HEK293 (cell line): ENCODE measurements at regions of chr11 and their contacts with region 1.

Region 1: GRCh38 chr11:124673333-124674167 is at the starts of genes SIAE and SPA17:
- H3K4me3 ChIP-seq: peak within 1 kb of the TSS; percentile 78
- H3K27ac ChIP-seq: peak within 1 kb of the TSS; percentile 35; the same call in 1 of the 2 replicates
- H3K4me1 ChIP-seq: no peaks in the 10 kb centered on the region; the same call in 1 of the 2 replicates
- CTCF ChIP-seq: no peak

Region 2: DNA sequence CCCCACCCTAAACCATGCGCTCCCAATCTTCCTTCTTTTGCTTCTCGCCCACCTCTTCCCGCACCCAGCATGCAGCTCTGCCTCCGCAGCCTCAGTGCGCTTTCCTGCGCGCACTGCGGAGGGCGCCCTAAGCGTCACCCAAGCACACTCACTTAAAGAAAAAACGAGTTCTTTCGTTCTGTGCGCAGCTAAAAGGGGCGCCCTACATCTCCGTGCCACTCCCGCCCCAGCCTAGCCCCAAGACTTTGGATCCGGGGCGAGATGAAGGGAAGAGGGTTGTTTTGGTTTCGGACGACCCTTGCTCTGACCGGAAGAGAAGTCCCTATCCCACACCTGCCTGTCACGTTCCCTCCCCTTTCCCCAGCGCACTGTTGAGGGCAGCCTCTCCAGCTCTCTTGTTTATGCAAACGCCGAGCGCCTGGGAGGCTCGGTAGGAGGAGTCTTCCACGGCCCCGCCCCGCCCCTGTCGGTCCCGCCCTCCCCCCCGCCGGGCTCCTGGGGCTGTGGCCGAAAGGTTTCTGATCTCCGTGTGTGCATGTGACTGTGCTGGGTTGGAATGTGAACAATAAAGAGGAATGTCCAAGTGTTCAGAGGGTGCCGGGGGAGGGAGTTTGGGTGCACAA is 73.2 kb after region 1 on chr11:
- CTCF ChIA-PET with region 1: interaction called, 23 read pairs
- POLR2A ChIA-PET with region 1: interaction called, 4 read pairs
- H3K4me3 ChIP-seq: peak overlapping the region; percentile 53
- H3K27ac ChIP-seq: no peak overlapping the region; the same call in 1 of the 2 replicates
- H3K4me1 ChIP-seq: no peaks in the 10 kb centered on the region
- CTCF ChIP-seq: peak; percentile 77

Region 3: DNA sequence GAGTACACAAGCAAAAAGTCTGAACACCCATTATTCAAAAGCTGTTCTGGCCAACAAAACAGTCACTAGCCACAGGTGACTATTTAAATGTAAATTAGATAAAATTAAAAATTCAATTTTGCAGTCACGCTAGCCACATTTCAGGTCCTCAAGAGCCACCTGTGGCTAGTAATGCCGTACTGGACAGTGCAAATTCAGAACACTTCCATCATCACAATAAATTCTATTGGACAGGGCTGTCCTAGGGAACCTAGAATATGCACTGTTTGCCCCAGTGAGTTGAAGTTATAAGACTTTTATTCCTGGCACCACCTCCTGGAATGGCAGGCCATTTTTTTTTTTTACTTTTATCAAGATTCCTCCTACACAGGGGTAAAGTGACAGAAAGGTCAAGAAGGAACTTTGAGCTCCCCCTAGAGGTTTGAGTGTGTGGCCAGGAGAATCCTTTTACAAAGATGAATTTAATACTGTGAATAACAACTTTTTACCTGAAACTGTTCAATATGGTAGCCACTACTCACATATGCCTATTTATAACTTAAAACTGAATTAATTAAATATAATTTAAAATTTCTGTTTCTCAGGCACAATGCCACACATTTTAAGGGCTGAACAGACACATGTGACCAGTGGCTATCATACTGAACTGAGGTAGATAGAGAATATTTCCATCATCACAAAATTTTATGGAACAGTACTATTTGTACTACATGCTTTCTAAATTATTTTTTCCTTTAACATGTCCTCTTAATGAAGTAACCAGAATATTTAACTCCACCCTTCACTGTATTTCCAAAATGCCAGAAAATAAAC is 120.1 kb after region 1 on chr11:
- CTCF ChIA-PET with region 1: interaction called, 52 read pairs
- POLR2A ChIA-PET with region 1: no interaction called
- H3K4me3 ChIP-seq: no peak overlapping the region
- H3K27ac ChIP-seq: no peak overlapping the region
- H3K4me1 ChIP-seq: peaks cover 8% of the 10 kb centered on the region
- CTCF ChIP-seq: no peak

Region 4: GRCh38 chr11:124837491-124837856 is 163.9 kb after region 1 on chr11:
- CTCF ChIA-PET with region 1: interaction called, 53 read pairs
- POLR2A ChIA-PET with region 1: interaction called, 4 read pairs
- H3K4me3 ChIP-seq: no peak overlapping the region
- H3K27ac ChIP-seq: no peak overlapping the region
- H3K4me1 ChIP-seq: no peaks in the 10 kb centered on the region
- CTCF ChIP-seq: 0 out of 2 replicates have a peak, but pooled peaks have one; percentile 54

Region 5: DNA sequence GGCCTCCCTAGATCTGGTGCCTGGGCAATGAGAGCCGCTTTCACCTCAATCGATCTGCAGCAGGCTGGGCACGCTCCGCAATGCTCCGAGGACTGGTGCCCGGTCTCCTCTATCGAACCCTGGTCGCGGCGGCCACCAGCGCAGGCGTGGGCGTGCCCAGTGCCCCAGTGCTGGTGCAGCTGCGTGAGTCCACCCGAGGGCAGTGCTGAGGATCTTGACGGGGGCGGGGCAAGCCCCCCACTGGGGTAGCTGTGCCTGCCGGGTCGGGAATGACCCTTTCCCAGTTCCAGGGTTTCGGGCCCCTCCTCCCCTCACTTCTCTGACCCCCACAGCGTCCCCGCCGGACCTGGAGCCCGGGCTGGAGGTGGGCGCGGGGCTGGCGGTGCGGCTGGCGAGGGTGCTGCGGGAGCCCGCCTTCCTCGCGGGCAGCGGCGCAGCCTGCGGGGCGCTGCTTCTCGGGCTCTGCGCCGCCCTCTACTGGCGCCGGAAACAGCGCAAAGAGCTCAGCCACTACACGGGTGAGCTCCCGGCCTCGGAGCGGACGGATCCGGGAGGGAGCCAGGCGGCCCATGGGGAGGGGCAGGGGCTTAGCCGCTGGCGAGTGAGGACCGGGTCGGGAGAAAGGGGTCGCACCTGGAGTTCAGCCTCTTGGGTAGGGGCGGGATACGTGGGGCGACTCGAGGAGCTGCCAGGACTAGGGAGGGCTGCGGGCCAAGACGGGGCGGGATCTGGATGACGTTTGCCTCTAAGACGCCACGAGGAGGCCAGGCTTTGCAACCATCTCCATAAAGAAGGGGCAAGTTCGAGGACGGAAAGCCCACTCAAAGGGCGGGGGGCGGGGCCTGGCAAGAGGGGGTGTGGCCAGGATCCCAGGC is 202.6 kb after region 1 on chr11:
- CTCF ChIA-PET with region 1: interaction called, 10 read pairs
- POLR2A ChIA-PET with region 1: no interaction called
- H3K4me3 ChIP-seq: peak overlapping the region; percentile 49
- H3K27ac ChIP-seq: peak overlapping the region; percentile 57
- H3K4me1 ChIP-seq: no peaks in the 10 kb centered on the region
- CTCF ChIP-seq: peak; percentile 81